ENCODE measurements at regions of chr17 and their contacts with region 1.

Region 1: DNA sequence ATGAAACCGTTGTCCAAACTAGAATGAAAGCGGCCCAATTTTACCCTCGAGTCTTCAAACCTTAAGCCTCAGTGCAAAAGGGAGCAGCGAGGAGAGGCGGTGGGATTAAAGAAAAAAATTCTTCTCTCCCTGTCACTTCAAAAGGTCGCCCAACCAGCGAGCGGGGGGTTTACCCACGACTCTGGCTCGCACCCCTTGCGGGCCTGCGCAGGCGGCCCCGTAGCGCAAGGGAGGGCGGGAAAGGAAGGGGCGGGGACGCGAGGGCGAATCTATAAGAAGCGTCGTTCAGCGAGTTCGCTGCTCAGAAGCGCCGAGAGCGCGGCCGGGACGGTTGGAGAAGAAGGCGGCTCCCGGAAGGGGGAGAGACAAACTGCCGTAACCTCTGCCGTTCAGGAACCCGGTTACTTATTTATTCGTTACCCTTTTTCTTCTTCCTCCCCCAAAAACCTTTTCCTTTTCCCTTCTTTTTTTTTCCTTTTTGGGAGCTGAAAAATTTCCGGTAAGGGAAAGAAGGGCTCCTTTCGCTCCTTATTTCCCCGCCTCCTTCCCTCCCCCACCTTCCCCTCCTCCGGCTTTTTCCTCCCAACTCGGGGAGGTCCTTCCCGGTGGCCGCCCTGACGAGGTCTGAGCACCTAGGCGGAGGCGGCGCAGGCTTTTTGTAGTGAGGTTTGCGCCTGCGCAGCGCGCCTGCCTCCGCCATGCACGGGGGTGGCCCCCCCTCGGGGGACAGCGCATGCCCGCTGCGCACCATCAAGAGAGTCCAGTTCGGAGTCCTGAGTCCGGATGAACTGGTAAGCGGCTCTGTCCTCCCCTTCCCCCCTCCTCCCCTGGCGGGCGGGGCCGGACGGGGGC is at the start of gene POLR2A:
- DNase-seq: peak; percentile 96 to 99 (median 98)
- H3K4me3 ChIP-seq: peak within 1 kb of the TSS; percentile 75 to 90 (median 87)
- H3K4me3 Mint-ChIP-seq: peak within 1 kb of the TSS; percentile 93 to 97
- H3K27ac ChIP-seq: peak within 1 kb of the TSS; percentile 95 to 98
- H3K27ac Mint-ChIP-seq: peak within 1 kb of the TSS; percentile 99 to 100 (median 100)
- H3K4me1 ChIP-seq: peaks cover 39 to 59% of the 10 kb centered on the region in 2 donors
- H3K4me1 Mint-ChIP-seq: peaks cover 70% of the 10 kb centered on the region
- H3K27me3 ChIP-seq: no peaks in the 10 kb centered on the region
- H3K27me3 Mint-ChIP-seq: peaks cover 1 to 3% (median 2%) of the 10 kb centered on the region in 3 donors
- CTCF ChIP-seq: no peak
- polyA plus RNA-seq, gene POLR2A: 12.1 to 27.9 (median 25.4) TPM

Region 2: DNA sequence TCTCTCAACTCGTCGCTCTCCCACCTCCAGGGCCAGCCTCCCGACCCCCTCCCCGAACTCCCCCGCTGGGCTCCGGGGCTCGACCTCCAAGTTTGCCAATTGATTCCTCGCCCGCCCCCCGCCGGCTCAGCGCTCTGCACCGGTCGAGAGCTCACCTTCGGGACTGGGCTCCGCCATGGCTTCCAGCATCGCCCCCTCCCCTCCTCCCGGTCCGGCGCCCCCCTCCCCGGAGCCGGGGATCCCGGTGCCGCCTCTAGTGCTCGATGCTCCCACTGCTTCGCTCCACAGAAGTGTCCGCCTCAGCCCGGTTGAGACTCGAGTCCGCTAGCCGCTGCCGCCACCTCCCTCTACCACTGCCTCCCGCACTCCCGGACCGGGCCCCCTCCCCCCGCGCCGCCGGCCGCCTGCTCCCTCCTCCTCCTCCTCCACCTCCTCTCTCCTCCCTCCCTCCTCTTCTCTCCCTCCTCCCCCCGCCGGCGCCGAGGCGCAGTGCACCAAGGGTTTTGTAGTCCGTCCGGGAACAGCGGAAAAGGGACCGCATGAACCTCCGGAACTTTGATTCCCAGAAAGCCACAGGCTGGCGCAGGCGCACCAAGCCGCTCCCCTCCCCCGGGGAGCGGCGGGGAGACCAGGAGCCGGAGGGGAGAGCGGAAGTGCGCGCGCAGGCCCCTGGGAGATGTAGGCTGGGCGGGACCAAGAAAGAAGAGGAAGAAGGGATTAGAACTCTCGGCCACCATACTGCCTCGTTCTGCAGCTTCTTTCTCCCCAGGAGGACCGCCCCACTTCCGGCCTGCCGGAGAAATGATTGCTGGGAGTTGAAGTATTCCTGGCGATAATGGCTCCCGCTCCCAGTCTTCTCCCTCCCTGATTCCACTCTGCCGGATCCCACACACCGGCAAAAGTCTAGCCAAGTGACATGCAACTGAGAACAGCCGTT is 244.9 kb before region 1 on chr17 and contains the start of gene PHF23:
- intact Hi-C with region 1: loop called in 1 of 2 experiments (anchors 10 kb)
- DNase-seq: peak; percentile 98 to 99 (median 99)
- H3K4me3 ChIP-seq: peak within 1 kb of the TSS; percentile 95 to 100 (median 98)
- H3K4me3 Mint-ChIP-seq: peak within 1 kb of the TSS; percentile 98 to 99
- H3K27ac ChIP-seq: peak within 1 kb of the TSS; percentile 64 to 100
- H3K27ac Mint-ChIP-seq: peak within 1 kb of the TSS; percentile 99 to 100 (median 100)
- H3K4me1 ChIP-seq: peaks cover 54 to 64% of the 10 kb centered on the region in 2 donors
- H3K4me1 Mint-ChIP-seq: peaks cover 57% of the 10 kb centered on the region
- H3K27me3 ChIP-seq: no peaks in the 10 kb centered on the region
- H3K27me3 Mint-ChIP-seq: peaks cover 0 to 5% (median 0%) of the 10 kb centered on the region in 3 donors
- CTCF ChIP-seq: no peak
- polyA plus RNA-seq, gene PHF23: 12.0 to 18.0 (median 12.9) TPM

Region 3: GRCh38 chr17:7351665-7352501 is 132.4 kb before region 1 on chr17 and contains the start of gene KCTD11:
- intact Hi-C with region 1: loop called in 1 of 2 experiments (anchors 10 kb)
- DNase-seq: peak; percentile 66 to 76 (median 74)
- H3K4me3 ChIP-seq: peak within 1 kb of the TSS; percentile 76 to 90 (median 88)
- H3K4me3 Mint-ChIP-seq: peak within 1 kb of the TSS; percentile 89 to 94
- H3K27ac ChIP-seq: peak within 1 kb of the TSS; percentile 55 to 81
- H3K27ac Mint-ChIP-seq: peak within 1 kb of the TSS; percentile 70 to 90 (median 87)
- H3K4me1 ChIP-seq: peaks cover 28 to 54% of the 10 kb centered on the region in 2 donors
- H3K4me1 Mint-ChIP-seq: peaks cover 40% of the 10 kb centered on the region
- H3K27me3 ChIP-seq: no peaks in the 10 kb centered on the region
- H3K27me3 Mint-ChIP-seq: peaks cover 3 to 5% (median 3%) of the 10 kb centered on the region in 3 donors
- CTCF ChIP-seq: peak; percentile 26
- polyA plus RNA-seq, gene KCTD11: 3.4 to 5.6 (median 3.6) TPM

Region 4: DNA sequence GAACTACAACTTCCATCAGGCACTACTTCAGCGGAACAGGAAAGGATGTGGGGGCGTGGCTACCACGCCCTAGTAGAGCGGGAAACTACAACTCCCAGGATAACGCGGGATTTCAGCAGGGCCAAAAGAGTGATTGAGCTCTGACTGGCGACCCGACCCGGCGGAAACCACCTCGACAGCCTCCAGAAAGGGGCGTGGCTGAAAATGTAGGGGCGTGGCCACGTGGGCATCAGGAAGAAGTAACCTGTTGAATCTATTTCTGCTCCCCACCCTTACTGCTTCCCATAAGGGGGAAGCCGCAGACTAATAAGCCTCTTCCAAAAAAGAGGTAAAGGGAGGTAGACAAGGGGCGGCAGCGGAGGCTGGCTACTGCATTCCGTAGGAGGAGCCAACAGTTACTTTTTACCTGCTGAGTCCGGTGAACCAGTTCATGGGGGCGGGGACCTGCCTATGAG is 49.0 kb before region 1 on chr17 and contains the start of gene TMEM102:
- intact Hi-C with region 1: loop called (anchors 1 to 2 kb)
- DNase-seq: peak; percentile 97 to 98 (median 98)
- H3K4me3 ChIP-seq: peak within 1 kb of the TSS; percentile 77 to 95 (median 86)
- H3K4me3 Mint-ChIP-seq: peak within 1 kb of the TSS; percentile 86 to 94
- H3K27ac ChIP-seq: peak within 1 kb of the TSS; percentile 79 to 89
- H3K27ac Mint-ChIP-seq: peak within 1 kb of the TSS; percentile 90 to 97 (median 94)
- H3K4me1 ChIP-seq: peaks cover 46 to 50% of the 10 kb centered on the region in 2 donors
- H3K4me1 Mint-ChIP-seq: peaks cover 43% of the 10 kb centered on the region
- H3K27me3 ChIP-seq: peaks cover 14 to 18% of the 10 kb centered on the region in 2 donors
- H3K27me3 Mint-ChIP-seq: peaks cover 22 to 31% (median 24%) of the 10 kb centered on the region in 3 donors
- CTCF ChIP-seq: no peak
- polyA plus RNA-seq, gene TMEM102: 5.1 to 11.3 (median 9.8) TPM

Region 5: GRCh38 chr17:7523033-7523432 is 38.7 kb after region 1 on chr17:
- intact Hi-C with region 1: no loop called
- DNase-seq: peak; percentile 29 to 52 (median 50)
- H3K4me3 ChIP-seq: no peak overlapping the region
- H3K4me3 Mint-ChIP-seq: no peak overlapping the region
- H3K27ac ChIP-seq: no peak overlapping the region
- H3K27ac Mint-ChIP-seq: no peak overlapping the region
- H3K4me1 ChIP-seq: no peaks in the 10 kb centered on the region
- H3K4me1 Mint-ChIP-seq: peaks cover 4% of the 10 kb centered on the region
- H3K27me3 ChIP-seq: no peaks in the 10 kb centered on the region
- H3K27me3 Mint-ChIP-seq: peaks cover 0 to 4% (median 4%) of the 10 kb centered on the region in 3 donors
- CTCF ChIP-seq: peak; percentile 75

Region 6: DNA sequence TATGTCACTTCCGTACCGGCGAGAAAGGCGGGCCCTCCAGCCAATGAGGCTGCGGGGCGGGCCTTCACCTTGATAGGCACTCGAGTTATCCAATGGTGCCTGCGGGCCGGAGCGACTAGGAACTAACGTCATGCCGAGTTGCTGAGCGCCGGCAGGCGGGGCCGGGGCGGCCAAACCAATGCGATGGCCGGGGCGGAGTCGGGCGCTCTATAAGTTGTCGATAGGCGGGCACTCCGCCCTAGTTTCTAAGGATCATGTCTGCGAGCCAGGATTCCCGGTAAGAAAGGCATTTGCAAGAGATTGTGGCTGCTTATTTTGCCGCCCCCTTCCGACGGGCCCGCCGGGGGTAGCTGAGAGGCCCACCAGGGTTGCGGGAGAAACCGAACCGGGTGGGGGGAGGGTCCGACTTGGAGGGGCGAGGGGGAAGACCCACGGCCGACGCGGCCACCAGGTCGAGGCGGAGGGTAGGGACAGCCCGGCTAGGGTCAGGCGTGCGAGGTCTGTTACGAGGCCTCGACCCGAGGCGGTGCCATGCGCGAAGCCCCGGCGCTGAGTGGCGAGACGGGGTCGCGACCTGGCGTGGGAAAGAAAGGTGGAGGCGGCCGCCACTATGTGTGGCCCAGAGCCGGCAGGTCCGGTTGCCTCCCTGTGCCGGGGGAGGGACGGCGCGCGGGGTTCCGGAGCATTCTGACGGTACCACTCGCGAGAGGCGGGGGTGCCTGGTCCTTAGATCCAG is 88.5 kb after region 1 on chr17:
- intact Hi-C with region 1: loop called in 1 of 2 experiments (anchors 5 kb)
- DNase-seq: peak; percentile 99 to 100 (median 100)
- H3K4me3 ChIP-seq: peak overlapping the region; percentile 60 to 100 (median 95)
- H3K4me3 Mint-ChIP-seq: peak overlapping the region; percentile 97 to 98
- H3K27ac ChIP-seq: peak overlapping the region; percentile 99
- H3K27ac Mint-ChIP-seq: peak overlapping the region; percentile 98 to 100 (median 99)
- H3K4me1 ChIP-seq: peaks cover 48 to 52% of the 10 kb centered on the region in 2 donors
- H3K4me1 Mint-ChIP-seq: peaks cover 54% of the 10 kb centered on the region
- H3K27me3 ChIP-seq: no peaks in the 10 kb centered on the region
- H3K27me3 Mint-ChIP-seq: peaks cover 0 to 9% (median 2%) of the 10 kb centered on the region in 3 donors
- CTCF ChIP-seq: no peak